ENCODE measurements at regions of chr4 and their contacts with region 1.

Region 1: GRCh38 chr4:113394730-113395530 is 345.5 kb downstream of the ANK2 start:
- DNase-seq: no peak
- ATAC-seq: peak; percentile 96

Region 2: GRCh38 chr4:113368056-113368455 is 26.9 kb before region 1 on chr4:
- intact Hi-C with region 1: no loop called
- DNase-seq: no peak
- ATAC-seq: no peak

Region 3: DNA sequence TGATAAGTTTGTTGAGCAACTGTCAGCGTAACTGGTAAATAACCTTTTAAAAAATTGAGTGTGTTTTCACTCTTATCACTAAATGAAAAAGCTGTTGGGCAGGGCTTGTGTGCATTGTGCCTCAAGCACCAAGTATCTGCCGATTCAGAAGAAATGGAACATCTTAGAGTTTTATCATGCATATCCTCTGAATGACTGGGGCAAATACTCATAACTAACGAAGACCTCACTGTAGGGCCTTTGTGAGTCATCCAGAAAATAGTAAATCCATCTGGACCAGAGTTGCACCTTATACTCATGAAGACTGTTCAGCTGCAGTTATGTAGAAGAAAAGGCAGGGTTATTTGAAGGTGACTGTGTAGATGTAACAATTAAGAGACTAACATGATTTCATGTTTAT is 144.5 kb after region 1 on chr4:
- intact Hi-C with region 1: loop called (anchors 10 kb)
- DNase-seq: no peak
- ATAC-seq: no peak

Region 4: GRCh38 chr4:113761620-113762185 is 366.8 kb after region 1 on chr4 and contains the start of gene CAMK2D:
- intact Hi-C with region 1: loop called (anchors 5 kb)
- DNase-seq: peak; percentile 91
- ATAC-seq: peak; percentile 84
- total RNA-seq, gene CAMK2D: 232 TPM

Region 5: DNA sequence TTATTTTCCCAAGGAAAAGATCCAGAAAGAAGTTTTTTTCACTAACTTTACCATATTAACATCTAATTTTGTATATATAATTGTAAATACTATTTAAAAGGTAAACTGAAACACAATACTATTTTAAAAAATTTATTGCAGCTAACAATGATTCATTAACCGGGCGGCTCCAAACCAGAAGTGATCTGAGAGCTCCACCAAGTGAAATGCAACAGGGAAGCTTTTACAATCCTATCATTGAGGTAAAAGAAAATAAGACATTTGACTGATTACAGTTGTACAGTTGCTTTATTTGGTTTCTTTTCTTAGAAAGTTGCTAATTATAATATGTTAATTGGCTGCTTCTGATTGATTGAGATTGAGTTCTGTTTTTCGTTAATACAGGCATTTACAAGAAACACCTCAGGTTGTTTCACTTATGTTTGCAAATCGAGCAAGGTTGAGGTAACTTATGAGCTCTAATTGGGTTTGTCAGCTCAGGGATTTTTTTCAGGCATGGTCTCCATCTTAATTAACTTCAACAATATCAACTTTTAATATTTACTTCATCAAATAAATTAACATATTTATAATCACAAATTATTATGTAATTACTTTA is 983.5 kb after region 1 on chr4:
- intact Hi-C with region 1: loop called (anchors 10 kb)
- DNase-seq: no peak
- ATAC-seq: no peak